ENCODE measurements at regions of chr7 and their contacts with region 1.

Region 1: DNA sequence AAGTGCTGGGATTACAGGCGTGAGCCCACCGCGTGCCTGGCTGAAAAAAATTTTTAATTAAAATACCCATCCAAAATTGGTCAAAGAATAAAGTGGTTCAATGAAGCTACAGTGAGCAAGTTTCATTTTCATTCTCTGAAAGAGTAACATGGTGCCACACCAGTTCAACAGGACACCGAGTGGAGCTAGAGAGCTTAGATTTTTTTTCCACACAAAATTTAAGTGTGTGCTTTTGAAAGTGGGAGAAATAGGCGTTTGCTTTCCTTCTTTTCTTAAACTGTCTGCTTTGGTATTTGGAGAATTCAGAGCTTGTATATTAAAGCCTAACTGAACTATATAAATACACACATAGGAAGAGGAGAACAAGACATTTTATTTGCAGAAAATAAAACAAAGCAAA is 43.4 kb downstream of the BPGM start:
- DNase-seq: no peak
- H3K4me3 ChIP-seq: no peak overlapping the region
- CTCF ChIP-seq: peak; percentile 41

Region 2: DNA sequence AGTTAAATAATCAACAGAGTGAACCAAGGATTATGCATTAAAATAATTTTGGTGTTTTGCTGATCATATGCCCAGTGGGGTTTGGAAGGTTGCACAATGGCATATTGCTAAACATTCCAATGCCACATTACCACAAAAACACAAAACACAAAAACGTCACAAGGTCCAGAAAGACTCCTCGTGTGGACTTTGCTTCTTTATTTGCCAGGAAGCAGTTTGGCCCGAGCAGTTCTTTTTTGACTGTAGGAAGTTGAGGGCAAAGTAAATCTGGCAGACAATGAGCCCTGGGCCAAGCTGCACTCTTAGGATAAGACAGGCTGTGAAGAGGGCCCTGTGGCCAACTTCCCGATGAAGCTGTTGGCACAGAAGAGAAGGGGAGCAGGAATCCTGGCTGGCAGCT is 334.1 kb before region 1 on chr7:
- CTCF ChIA-PET with region 1: no interaction called
- POLR2A ChIA-PET with region 1: no interaction called
- DNase-seq: no peak
- H3K4me3 ChIP-seq: no peak overlapping the region
- CTCF ChIP-seq: no peak

Region 3: DNA sequence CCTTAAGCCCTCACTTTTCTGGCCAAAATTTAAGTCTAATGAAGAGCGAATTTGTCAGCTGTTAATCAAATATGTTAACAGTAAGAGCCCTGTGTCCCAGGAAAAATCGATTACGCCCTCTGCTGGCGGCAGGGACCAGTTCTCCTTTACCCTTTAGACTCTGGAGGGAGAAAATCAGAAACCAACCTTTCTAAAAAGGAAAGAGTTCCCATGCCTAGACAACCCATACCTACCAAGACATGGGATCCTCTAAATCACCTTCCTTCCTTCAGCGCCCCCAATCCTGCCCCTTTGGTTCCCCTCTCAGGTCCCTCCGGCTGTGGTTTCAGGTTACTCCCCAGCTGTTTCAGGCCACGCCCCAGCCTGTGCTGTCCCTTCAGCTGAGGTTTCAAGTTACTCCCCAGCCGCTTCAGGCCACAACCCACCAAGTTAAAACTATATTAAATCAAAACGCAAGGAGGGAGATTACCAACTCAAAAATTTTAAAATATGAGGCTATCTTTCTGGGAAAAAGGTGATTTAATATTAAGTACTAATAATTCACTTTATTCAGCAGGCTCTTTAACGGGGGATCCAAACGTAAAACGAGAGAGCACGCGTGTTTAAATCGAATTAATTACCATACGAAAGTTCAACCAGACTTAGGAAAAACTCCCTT is 142.5 kb before region 1 on chr7:
- CTCF ChIA-PET with region 1: no interaction called
- POLR2A ChIA-PET with region 1: no interaction called
- DNase-seq: no peak
- H3K4me3 ChIP-seq: peak overlapping the region; percentile 57
- CTCF ChIP-seq: peak; percentile 65

Region 4: DNA sequence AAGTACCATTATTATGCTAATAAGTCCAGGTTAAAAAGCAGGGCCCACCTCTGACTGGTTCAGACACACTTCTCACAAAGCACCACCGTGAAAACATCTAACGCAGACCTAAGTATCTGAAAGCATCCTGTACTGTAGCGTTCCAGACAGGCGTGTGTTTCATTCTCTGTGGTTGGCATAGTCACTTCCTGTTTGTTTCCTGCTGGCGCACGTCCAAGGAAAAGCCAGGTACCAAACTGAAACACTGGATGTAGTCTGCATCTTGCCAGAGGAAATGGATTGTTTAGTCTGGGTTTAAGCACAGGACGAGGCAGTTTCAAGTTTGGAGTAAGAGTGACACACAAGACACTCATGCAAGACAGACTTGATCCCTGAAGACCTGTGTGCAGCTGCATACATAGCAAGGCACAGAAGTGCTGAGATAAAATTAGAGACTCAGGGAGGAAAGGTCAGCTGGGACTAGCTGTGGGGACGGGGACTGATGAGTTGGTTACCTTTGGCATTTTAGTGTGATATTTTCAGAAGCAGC is 20.1 kb before region 1 on chr7:
- CTCF ChIA-PET with region 1: interaction called, 32 read pairs
- POLR2A ChIA-PET with region 1: no interaction called
- DNase-seq: no peak
- H3K4me3 ChIP-seq: no peak overlapping the region
- CTCF ChIP-seq: no peak

Region 5: DNA sequence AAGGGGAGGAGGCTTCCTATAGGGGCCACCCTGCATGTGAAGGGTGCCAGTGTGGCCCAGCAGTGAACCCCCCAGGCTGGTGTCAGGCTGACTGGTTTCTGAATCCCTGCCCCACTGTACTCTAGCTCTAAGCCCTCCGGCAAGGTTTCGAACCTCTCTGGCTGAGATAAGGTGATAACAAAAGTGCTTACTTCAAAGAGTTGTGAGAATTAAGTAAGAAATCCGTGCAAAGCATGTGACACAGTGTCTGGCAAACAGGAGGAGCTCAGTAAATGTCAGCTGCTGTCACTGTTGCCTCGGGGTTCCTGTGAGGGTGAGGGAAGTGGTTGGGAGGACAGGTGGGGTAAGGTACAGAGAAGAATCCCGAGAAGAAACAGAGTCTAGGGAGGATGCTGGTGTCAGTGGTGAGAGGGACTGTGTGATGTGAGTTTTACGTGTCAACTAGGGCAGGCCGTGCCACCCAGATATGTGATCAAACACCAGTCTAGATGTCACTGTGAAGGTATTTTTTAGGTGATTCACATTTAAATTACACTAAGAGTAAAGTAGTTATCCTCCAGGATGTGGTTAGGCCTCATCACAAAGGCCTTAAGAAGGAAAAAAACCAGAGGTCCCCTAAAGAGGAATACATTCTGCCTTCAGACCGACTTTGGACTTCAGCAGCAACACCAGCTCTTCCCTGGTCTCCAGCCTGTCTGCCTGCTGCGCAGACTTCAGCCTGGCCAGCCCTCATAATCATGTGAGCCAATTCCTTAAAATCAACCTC is 21.0 kb after region 1 on chr7:
- CTCF ChIA-PET with region 1: interaction called, 10 read pairs
- POLR2A ChIA-PET with region 1: interaction called, 7 read pairs
- DNase-seq: no peak
- H3K4me3 ChIP-seq: no peak overlapping the region
- CTCF ChIP-seq: no peak

Region 6: DNA sequence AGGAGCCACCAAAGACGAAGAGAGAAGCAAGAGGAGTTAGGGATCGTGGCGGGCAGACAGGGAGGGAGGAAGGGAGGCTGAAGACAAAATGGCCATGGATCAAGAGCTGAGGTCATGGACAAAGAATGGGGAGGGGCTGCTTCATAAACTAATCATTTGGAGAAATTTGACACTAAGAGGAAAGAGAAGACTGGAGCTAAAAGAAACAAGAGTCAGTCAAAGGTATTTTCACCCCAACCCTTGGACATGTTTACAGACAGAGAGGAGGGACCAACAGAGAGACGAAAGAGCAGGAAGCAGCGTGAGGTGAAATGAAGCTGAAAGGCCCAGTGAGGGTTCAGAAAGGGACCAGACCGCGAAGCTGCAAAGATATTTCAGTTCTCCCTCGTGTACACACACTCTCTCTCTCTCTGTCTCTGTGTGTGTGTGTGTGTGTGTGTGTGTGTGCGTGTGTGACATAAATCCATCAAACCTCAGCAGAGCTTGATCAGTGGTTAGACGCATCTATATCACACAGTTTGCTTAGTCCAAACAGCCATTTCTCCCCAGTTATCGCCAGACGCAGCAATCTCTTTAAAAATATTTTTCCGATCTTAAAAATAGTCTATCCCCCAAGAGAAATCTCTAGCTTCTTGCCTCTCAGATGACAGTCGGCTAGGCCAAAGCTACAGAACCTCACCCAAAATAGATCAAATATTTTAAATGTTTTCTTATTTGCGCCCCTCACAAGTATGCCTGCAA is 76.9 kb after region 1 on chr7:
- CTCF ChIA-PET with region 1: interaction called, 18 read pairs
- POLR2A ChIA-PET with region 1: interaction called, 5 read pairs
- DNase-seq: no peak
- H3K4me3 ChIP-seq: no peak overlapping the region
- CTCF ChIP-seq: no peak

Region 7: DNA sequence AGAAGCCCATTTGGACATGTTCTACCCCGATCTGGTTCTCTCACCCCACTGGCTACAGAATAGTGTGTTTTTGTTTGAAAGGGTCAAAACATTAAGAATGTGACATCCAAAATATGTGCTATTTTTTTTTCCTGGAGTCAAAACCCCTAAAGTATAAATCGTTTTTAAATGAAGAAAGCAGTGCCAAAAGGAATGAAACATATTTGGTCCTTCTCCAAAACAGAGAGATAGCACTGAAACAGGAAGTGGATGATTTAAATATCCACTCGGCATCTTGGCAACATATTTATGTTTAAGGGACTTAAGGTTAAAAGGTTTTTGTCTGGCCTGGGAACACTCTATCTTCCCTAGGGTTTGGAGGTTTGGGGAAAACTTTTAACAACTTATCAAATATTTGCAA is 121.7 kb after region 1 on chr7:
- CTCF ChIA-PET with region 1: interaction called, 19 read pairs
- POLR2A ChIA-PET with region 1: interaction called, 4 read pairs
- DNase-seq: no peak
- H3K4me3 ChIP-seq: no peak overlapping the region
- CTCF ChIP-seq: no peak

Region 8: GRCh38 chr7:134954197-134955082 is 264.4 kb after region 1 on chr7:
- CTCF ChIA-PET with region 1: interaction called, 10 read pairs
- POLR2A ChIA-PET with region 1: no interaction called
- DNase-seq: no peak
- H3K4me3 ChIP-seq: no peak overlapping the region
- CTCF ChIP-seq: no peak

Region 9: GRCh38 chr7:135274495-135275268 is 584.7 kb after region 1 on chr7:
- CTCF ChIA-PET with region 1: interaction called, 44 read pairs
- POLR2A ChIA-PET with region 1: no interaction called
- DNase-seq: peak; percentile 9
- H3K4me3 ChIP-seq: no peak overlapping the region
- CTCF ChIP-seq: peak; percentile 81

Measured in AG04449 (cell line).